Mammary epithelial cell (primary cell): ENCODE measurements at regions of chr1 and their contacts with region 1.

Region 1: GRCh38 chr1:17244816-17245740 is 3.8 kb upstream of the PADI3 start:
- DNase-seq: peak; percentile 60
- H3K4me3 ChIP-seq: no peak overlapping the region
- H3K27ac ChIP-seq: no peak overlapping the region
- H3K4me1 ChIP-seq: peaks cover 31% of the 10 kb centered on the region
- H3K27me3 ChIP-seq: no peaks in the 10 kb centered on the region
- CTCF ChIP-seq: no peak

Region 2: GRCh38 chr1:17190010-17190995 is 54.8 kb before region 1 on chr1:
- CTCF ChIA-PET with region 1: no interaction called
- dilution Hi-C with region 1: loop called (anchors 5 kb)
- in situ Hi-C with region 1: no loop called
- intact Hi-C with region 1: no loop called
- DNase-seq: peak; percentile 92
- H3K4me3 ChIP-seq: no peak overlapping the region
- H3K27ac ChIP-seq: peak overlapping the region; percentile 64
- H3K4me1 ChIP-seq: peaks cover 61% of the 10 kb centered on the region
- H3K27me3 ChIP-seq: no peaks in the 10 kb centered on the region
- CTCF ChIP-seq: no peak

Region 3: GRCh38 chr1:17405898-17406759 is 161.1 kb after region 1 on chr1:
- CTCF ChIA-PET with region 1: no interaction called
- dilution Hi-C with region 1: no loop called
- in situ Hi-C with region 1: no loop called
- intact Hi-C with region 1: no loop called
- DNase-seq: peak; percentile 32
- H3K4me3 ChIP-seq: no peak overlapping the region
- H3K27ac ChIP-seq: no peak overlapping the region
- H3K4me1 ChIP-seq: peaks cover 19% of the 10 kb centered on the region
- H3K27me3 ChIP-seq: no peaks in the 10 kb centered on the region
- CTCF ChIP-seq: peak; percentile 79 to 83

Region 4: DNA sequence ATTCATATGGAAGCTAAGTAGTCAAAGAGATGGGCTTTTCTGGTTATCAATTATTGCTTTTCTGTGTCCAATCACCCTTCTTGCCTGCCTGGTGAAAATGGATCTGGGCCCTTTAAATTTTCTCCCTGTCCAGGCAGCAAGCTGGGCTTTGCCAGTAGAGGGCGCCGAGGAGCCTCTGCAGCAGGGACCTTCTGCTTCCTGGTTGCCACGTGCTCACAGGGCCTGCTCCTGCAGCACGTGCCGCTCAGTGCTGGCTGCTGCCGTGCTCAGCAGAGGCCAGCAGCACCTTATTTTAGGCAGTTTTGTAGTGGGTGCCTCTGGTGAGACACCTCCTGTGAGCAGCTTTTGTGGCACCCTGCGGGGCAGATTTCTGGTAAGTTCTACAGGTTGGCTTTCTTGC is 514.0 kb after region 1 on chr1:
- CTCF ChIA-PET with region 1: no interaction called
- dilution Hi-C with region 1: no loop called
- in situ Hi-C with region 1: no loop called
- intact Hi-C with region 1: no loop called
- DNase-seq: no peak
- H3K4me3 ChIP-seq: no peak overlapping the region
- H3K27ac ChIP-seq: no peak overlapping the region
- H3K4me1 ChIP-seq: no peaks in the 10 kb centered on the region
- H3K27me3 ChIP-seq: no peaks in the 10 kb centered on the region
- CTCF ChIP-seq: no peak